ENCODE measurements at regions of chr10 and their contacts with region 1.

Region 1: GRCh38 chr10:96831867-96832720 is at the start of gene LCOR:
- DNase-seq: peak; percentile 85
- H3K4me3 ChIP-seq: peak within 1 kb of the TSS; percentile 81 to 99 (median 82)
- H3K27ac ChIP-seq: peak within 1 kb of the TSS; percentile 60
- H3K4me1 ChIP-seq: peaks cover 24% of the 10 kb centered on the region
- H3K27me3 ChIP-seq: no peaks in the 10 kb centered on the region
- CTCF ChIP-seq: no peak
- POLR2A ChIP-seq: peak; percentile 87
- total RNA-seq, gene LCOR: 32.9 and 39.0 TPM in 2 replicates

Region 2: DNA sequence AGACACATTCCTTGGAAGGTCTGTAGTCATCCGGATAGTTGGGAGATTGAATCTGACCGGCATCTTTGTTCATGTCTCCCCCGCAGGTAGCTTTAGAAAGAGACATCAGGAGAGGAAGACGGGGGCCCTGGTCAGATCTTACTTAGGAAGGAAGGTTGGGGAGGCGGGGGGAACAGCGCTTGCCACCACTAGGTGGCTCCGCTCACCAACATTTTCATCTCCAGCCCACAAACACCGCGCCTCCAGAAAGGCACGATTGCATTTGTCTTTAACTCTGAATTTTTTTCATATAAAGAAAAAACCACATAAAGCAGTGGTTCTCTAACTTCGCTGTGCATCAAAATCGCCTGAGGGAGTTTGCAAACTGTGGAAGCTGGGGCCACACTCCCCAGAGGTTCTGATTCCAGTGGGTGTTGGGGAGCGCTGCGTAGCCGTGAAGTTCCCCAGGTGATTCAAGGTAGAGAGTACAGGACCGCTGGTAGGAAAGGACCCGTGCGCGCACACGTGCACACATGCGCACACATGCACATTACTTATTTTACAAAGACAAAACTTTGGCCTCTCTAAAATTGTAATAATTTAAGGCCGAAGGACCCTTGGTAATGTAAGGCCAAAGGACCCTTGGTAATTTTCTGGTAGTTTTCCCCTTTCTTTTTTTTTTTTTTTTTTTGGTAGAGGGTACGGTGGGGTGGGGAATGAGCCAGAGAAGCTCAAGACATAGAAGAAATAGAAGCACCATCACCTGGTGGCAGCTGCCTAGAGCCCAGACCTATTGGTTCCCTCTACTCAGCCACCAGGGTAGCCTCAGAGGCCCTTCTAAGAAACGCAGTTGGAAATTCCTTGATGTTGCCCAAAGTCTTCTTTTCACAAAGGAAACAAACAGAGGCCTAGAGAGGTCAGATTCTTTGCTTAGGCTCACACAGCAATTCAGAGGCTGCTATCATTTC is 435.9 kb before region 1 on chr10:
- CTCF ChIA-PET with region 1: interaction called, 3 read pairs
- POLR2A ChIA-PET with region 1: no interaction called
- dilution Hi-C with region 1: no loop called
- intact Hi-C with region 1: loop called (anchors 1 kb)
- DNase-seq: peak; percentile 64
- H3K4me3 ChIP-seq: no peak overlapping the region
- H3K27ac ChIP-seq: no peak overlapping the region
- H3K4me1 ChIP-seq: no peaks in the 10 kb centered on the region
- H3K27me3 ChIP-seq: peaks cover 4 to 9% of the 10 kb centered on the region in 2 experiments
- CTCF ChIP-seq: peak; percentile 76 to 86
- POLR2A ChIP-seq: no peak

Region 3: GRCh38 chr10:96586419-96587263 is 245.5 kb before region 1 on chr10 and contains the start of gene TM9SF3:
- CTCF ChIA-PET with region 1: no interaction called
- POLR2A ChIA-PET with region 1: no interaction called
- dilution Hi-C with region 1: no loop called
- intact Hi-C with region 1: loop called (anchors 1 kb)
- DNase-seq: peak; percentile 84
- H3K4me3 ChIP-seq: peak within 1 kb of the TSS; percentile 59 to 92 (median 61)
- H3K27ac ChIP-seq: peak within 1 kb of the TSS; percentile 98
- H3K4me1 ChIP-seq: peaks cover 53% of the 10 kb centered on the region
- H3K27me3 ChIP-seq: no peaks in the 10 kb centered on the region
- CTCF ChIP-seq: no peak
- POLR2A ChIP-seq: peak; percentile 26
- total RNA-seq, gene TM9SF3: 142 and 144 TPM in 2 replicates

Region 4: GRCh38 chr10:96765406-96766240 is 66.5 kb before region 1 on chr10:
- CTCF ChIA-PET with region 1: interaction called, 3 read pairs
- POLR2A ChIA-PET with region 1: no interaction called
- dilution Hi-C with region 1: no loop called
- intact Hi-C with region 1: loop called (anchors 1 kb)
- DNase-seq: peak; percentile 38
- H3K4me3 ChIP-seq: no peak overlapping the region
- H3K27ac ChIP-seq: no peak overlapping the region
- H3K4me1 ChIP-seq: no peaks in the 10 kb centered on the region
- H3K27me3 ChIP-seq: no peaks in the 10 kb centered on the region
- CTCF ChIP-seq: peak; percentile 79 to 89
- POLR2A ChIP-seq: no peak

Region 5: DNA sequence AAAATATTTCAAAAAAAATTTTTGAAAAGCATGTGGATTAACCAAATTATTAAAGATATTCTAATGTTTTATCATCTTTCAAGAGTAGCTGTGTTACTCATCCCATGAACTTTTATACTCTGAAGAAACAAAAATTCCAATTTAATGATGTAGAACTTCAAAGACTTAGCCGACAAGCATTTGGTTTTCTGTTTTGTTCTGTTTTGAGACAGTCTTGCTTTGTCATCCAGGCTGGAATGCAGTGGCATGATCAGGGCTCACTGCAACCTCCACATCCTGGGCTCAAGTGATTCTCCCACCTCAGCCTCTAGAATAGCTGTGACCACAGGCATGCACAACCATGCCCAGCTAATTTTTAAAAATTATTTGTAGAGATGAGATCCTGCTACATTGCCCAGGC is 17.8 kb before region 1 on chr10:
- CTCF ChIA-PET with region 1: no interaction called
- POLR2A ChIA-PET with region 1: no interaction called
- dilution Hi-C with region 1: no loop called
- intact Hi-C with region 1: no loop called
- DNase-seq: no peak
- H3K4me3 ChIP-seq: no peak overlapping the region
- H3K27ac ChIP-seq: no peak overlapping the region
- H3K4me1 ChIP-seq: no peaks in the 10 kb centered on the region
- H3K27me3 ChIP-seq: peaks cover 0 to 5% of the 10 kb centered on the region in 2 experiments
- CTCF ChIP-seq: no peak
- POLR2A ChIP-seq: no peak

Region 6: DNA sequence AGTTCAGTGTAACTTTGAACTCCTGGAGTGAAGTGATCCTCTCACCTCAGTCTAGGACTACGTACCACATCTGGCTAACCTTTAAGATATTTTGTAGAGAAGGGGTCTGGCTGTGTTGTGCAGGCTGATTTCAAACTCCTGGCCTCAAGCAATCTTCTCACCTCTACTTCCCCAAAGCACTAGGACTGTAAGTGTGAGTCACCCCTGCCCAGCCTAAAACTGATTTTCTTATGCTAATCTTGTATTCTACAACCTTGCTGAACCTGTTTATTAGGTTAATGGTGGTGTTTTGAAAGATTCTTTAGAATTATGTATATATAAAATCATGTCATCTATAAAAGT is 58.0 kb after region 1 on chr10:
- CTCF ChIA-PET with region 1: no interaction called
- POLR2A ChIA-PET with region 1: no interaction called
- dilution Hi-C with region 1: no loop called
- intact Hi-C with region 1: no loop called
- DNase-seq: no peak
- H3K4me3 ChIP-seq: no peak overlapping the region
- H3K27ac ChIP-seq: no peak overlapping the region
- H3K4me1 ChIP-seq: no peaks in the 10 kb centered on the region
- H3K27me3 ChIP-seq: no peaks in the 10 kb centered on the region
- CTCF ChIP-seq: no peak
- POLR2A ChIP-seq: no peak

Region 7: DNA sequence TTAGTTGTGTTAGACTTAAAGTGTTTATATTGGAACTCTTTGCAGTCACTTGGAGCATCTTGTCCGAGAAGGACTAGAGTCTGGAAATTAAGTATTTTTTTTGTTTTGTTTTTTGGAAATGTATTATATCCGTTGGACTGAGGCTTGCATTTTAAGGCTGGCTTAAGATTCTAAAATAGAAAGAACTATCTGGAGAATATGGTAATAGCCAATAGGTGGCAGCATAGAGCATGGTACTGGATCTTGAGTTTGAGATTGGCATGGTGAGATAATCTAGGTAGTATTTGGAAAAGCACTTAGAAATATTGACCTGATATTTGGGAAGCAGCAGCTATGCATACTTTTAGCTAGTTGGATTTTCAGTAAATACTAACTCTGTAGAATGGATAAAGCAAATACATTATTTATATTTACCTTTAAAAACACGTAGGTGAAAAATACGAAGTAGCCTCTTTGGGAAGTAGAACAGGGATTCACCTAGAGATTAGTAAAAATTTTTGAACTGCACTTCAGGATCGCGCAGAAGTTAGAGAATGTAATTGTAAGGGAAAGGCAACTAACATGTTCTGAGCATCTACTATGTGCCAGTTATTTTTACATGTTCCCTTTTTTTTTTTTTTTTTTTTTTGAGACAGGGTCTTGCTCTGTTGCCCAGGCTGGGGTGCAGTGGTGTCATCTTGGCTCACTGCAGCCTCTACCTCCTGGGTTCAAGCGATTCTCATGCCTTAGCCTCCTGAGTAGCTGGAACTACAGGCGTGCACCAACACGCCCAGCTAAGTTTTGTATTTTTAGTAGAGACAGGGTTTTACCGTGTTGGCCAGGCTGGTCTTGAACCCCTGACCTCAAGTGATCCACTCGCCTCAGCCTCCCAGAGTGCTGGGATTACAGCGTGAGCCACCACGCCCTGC is 78.6 kb after region 1 on chr10:
- CTCF ChIA-PET with region 1: no interaction called
- POLR2A ChIA-PET with region 1: no interaction called
- dilution Hi-C with region 1: no loop called
- intact Hi-C with region 1: loop called (anchors 5 kb)
- DNase-seq: peak; percentile 64
- H3K4me3 ChIP-seq: no peak overlapping the region
- H3K27ac ChIP-seq: no peak overlapping the region
- H3K4me1 ChIP-seq: no peaks in the 10 kb centered on the region
- H3K27me3 ChIP-seq: no peaks in the 10 kb centered on the region
- CTCF ChIP-seq: peak; percentile 40 to 42
- POLR2A ChIP-seq: no peak

Region 8: GRCh38 chr10:96955794-96956193 is 123.7 kb after region 1 on chr10:
- CTCF ChIA-PET with region 1: no interaction called
- POLR2A ChIA-PET with region 1: no interaction called
- dilution Hi-C with region 1: no loop called
- intact Hi-C with region 1: no loop called
- DNase-seq: no peak
- H3K4me3 ChIP-seq: no peak overlapping the region
- H3K27ac ChIP-seq: no peak overlapping the region
- H3K4me1 ChIP-seq: peaks cover 9% of the 10 kb centered on the region
- H3K27me3 ChIP-seq: no peaks in the 10 kb centered on the region
- CTCF ChIP-seq: no peak
- POLR2A ChIP-seq: no peak

Region 9: DNA sequence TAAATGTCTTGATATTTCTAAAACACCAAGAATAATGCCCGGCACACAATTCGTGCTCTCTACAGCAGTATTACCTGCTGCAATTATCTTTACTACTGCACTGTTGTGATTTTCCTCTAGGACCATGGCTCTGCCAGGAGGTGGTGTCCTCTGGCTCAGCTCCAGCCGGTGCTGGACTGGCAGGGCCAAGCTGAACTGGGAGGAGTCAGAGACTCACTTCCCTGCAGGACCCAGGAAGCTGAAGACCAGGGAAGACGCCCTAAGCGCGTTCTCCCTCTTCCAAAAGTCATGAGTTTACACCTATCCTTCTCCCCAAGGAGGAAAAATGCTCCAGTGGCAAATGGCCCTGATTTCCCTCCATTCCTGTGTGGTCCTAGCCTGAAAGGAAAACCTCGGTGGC is 338.2 kb after region 1 on chr10:
- CTCF ChIA-PET with region 1: no interaction called
- POLR2A ChIA-PET with region 1: no interaction called
- dilution Hi-C with region 1: no loop called
- intact Hi-C with region 1: no loop called
- DNase-seq: no peak
- H3K4me3 ChIP-seq: no peak overlapping the region
- H3K27ac ChIP-seq: no peak overlapping the region
- H3K4me1 ChIP-seq: no peaks in the 10 kb centered on the region
- H3K27me3 ChIP-seq: no peaks in the 10 kb centered on the region
- CTCF ChIP-seq: no peak
- POLR2A ChIP-seq: no peak

Measured in endothelial cell of umbilical vein (primary cell).